Panc1 (cell line): ENCODE measurements at regions of chr12 and their contacts with region 1.

Region 1: DNA sequence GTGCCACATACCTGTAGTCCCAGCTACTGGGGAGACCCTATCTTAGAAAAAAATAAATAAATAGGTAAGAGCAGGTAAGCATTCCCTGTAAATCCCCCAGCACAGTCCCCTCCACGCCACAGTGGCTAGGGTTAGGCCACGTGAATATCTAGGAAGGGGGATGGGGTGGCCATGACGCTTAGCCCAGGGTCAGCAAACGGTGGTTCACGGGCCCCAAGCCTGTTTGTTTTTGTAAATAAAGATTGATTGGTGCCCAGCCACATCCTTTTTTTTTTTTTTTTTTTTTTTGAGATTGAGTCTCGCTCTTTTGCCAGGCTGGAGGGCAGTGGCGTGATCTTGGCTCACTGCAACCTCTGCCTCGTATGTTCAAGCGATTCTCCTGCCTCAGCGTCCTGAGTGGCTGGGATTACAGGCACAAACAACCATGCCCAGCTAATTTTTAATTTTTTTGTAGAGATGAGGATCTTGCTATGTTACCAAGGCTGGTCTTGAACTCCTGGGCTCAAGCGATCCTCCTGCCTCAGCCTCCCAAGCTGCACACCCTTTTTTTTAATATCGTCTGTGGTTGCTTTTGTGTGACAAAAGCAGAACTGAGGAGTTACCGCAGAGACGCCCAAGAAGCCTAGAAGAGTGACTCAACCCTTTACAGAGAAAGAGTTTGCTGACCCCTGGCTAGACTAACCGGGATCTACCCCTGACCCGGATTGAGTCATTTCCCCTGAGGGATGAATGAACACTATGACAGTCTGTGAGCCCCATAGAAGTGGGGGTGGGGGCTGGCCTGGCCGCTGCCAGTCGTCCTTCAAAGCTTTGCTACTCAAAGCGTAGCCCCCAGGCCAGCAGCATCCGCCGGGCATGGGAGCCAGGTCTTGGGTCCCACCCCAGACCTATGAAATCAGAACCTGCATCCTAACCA is 113.7 kb upstream of the NCOR2 start:
- DNase-seq: peak; percentile 91
- ATAC-seq: peak; percentile 83
- H3K4me3 ChIP-seq: peak overlapping the region in 1 of 2 experiments; percentile 15; a peak in 2 of 4 replicates
- H3K27ac ChIP-seq: peak overlapping the region; percentile 98
- H3K4me1 ChIP-seq: peaks cover 87% of the 10 kb centered on the region
- H3K27me3 ChIP-seq: no peaks in the 10 kb centered on the region
- CTCF ChIP-seq: no peak

Region 2: DNA sequence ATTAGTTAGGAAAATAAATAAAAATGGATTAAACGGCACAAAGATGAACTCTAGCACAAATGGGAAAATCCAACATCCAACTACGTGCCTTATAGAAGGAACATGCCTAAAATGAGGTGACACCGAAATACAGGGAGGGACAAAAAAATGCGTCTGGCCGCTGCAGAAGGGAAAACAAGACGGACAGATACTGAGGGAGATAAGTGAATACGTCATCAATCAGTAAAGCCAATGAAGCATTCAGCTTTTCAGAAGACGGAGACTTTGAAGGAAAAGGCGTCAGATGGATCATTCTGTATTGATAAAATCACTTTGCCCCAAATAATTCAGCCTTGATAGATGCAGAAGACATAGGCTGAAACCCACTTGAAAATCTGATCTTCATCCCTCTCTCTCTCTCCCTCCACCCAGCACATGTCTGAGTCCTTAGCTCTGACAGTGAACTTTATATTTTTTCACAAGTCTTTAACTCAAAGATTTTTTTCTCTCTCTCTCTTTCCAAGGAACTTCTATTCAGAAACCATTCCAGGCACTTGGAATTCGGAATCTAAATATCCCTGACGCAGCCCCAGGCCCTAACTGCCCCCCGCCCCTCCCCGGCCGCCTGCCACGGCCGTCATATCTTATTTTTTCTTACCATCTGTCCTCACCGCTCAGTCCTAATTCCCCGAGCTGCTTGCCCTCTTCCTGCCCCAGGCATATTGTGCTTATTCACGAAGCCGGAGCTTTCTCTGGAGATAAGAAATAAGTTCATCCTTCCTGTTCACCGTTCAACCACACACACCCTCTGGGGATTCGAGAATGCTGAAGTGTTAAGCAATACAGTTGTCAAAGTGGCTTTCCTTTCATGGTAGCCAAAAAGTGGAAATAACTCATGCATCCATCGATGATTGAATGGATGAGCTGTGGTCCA is 421.7 kb before region 1 on chr12:
- CTCF ChIA-PET with region 1: no interaction called
- POLR2A ChIA-PET with region 1: no interaction called
- in situ Hi-C with region 1: no loop called
- intact Hi-C with region 1: no loop called
- DNase-seq: no peak
- ATAC-seq: no peak
- H3K4me3 ChIP-seq: no peak overlapping the region
- H3K27ac ChIP-seq: no peak overlapping the region
- H3K4me1 ChIP-seq: no peaks in the 10 kb centered on the region
- H3K27me3 ChIP-seq: peaks cover 14% of the 10 kb centered on the region
- CTCF ChIP-seq: no peak

Region 3: DNA sequence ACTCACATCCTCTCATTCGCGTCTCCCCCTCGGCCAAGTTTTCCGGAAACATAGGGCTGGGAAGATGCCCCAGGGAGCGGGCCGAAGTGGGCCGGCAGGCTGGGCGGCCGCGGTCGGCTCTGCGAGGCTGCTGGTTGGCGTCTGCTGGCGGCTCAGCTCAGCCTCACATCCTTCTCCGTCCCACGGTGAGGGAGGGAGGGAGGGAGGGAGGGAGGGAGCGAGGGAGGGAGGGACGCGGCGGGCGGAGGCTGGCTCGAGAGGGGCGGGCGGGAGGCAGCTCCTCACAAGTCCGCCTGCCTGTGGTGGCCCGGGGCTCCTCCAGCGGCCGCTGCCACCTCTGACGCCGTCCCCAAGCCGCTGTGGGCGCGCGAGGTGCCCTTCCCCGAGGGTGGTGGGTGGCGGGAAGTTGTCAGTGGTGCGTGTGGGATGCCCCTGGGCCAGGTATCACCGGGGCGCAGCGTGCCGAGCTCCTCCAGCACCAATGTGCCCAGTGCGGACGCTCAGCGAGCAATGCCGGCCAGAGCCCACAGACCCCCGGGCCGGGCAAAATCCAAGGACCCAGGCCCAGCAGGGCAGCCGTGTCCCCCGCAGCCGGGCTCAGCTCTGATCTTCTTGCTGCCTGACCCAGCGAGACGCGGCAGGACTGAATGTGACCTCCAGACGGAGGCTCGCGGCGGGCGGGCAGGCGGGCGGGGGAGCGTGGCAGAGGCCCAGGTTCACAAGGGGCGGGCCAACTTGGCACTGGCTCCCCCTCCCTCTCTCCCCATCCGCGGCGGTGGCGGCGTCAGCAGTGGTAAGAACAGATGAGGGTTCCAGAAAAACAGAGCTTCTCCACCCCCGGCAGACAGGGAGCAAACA is 292.2 kb before region 1 on chr12:
- CTCF ChIA-PET with region 1: no interaction called
- POLR2A ChIA-PET with region 1: no interaction called
- in situ Hi-C with region 1: no loop called
- intact Hi-C with region 1: loop called (anchors 10 kb)
- DNase-seq: no peak
- ATAC-seq: peak; percentile 59
- H3K4me3 ChIP-seq: peak overlapping the region; percentile 72 to 86
- H3K27ac ChIP-seq: peak overlapping the region; percentile 94
- H3K4me1 ChIP-seq: peaks cover 73% of the 10 kb centered on the region
- H3K27me3 ChIP-seq: no peaks in the 10 kb centered on the region
- CTCF ChIP-seq: no peak

Region 4: DNA sequence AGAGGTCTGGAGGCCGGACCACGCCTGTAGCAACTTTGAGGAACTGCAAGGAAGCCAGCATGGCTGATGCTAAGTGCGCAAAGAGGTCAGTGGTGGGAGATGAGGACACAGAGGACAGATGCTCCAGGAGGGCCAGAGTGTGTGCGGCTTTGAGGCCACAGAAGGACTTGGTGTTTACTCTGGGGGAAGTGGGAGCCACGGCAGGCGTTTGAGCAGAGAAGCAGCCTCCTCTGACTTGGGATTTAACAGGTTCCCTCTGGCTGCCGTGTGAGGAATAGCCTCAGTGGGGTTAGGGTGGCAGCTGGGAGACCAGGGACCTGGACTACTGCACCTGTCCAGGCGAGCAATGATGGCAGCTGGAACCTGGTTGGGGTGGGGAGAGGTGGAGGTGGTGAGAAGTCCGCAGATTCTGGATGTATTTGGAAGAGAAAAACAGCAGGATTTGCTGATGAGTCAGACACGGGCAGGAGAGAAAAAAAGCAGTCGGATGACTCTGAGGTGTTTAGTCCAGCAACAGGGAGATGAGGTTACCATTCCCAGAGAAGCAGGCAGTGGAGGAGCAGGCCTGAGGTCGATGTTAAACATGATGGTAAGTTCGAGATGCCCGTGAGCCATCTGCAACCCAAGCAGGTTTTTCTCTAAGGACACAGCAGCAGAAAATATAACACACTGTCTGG is 39.0 kb after region 1 on chr12:
- CTCF ChIA-PET with region 1: interaction called, 3 read pairs
- POLR2A ChIA-PET with region 1: interaction called, 3 read pairs
- in situ Hi-C with region 1: no loop called
- intact Hi-C with region 1: loop called (anchors 5 kb)
- DNase-seq: no peak
- ATAC-seq: peak; percentile 40
- H3K4me3 ChIP-seq: no peak overlapping the region
- H3K27ac ChIP-seq: peak overlapping the region; percentile 69
- H3K4me1 ChIP-seq: peaks cover 39% of the 10 kb centered on the region
- H3K27me3 ChIP-seq: no peaks in the 10 kb centered on the region
- CTCF ChIP-seq: peak; percentile 13; the same call in 1 of the 2 replicates

Region 5: DNA sequence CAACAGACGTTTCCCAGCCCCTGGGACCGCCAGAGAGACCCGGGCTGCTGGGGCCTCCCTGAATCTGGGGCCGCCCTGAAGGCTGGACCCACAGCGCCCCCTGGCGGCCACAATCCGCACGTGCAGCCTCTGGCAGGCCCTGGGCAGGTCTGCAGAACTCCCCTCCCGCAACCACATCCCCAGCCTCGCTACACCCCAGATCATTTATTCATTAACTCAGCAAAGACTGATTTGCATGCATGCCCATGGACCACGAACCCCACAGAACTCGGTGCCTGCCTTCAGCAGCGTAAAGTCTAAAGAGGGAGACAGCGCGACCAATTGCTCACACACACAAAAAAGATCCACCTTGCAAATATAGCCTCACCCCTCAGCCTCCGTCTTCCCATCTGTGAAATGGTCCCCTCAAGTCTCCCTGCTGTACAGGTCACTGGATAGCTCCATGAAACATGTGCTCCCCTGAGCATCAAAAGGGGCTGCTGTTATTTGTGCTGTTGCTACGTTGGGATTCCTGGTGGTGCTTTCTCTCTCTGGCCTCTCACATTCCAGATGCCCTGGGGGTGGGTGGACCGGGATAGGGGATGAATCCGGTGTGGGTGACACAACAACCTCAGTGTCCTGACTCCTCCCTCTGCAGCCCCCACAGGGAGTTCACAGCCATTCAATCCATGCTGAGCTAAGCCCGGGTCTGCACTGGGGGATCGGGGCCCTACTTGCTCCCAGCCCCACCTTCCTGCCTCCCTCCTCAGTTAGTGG is 86.1 kb after region 1 on chr12:
- CTCF ChIA-PET with region 1: no interaction called
- POLR2A ChIA-PET with region 1: no interaction called
- in situ Hi-C with region 1: no loop called
- intact Hi-C with region 1: loop called (anchors 5 kb)
- DNase-seq: no peak
- ATAC-seq: peak; percentile 85
- H3K4me3 ChIP-seq: no peak overlapping the region
- H3K27ac ChIP-seq: 0 out of 2 replicates have a peak overlapping the region, but pooled peaks have one; percentile 3
- H3K4me1 ChIP-seq: peaks cover 32% of the 10 kb centered on the region
- H3K27me3 ChIP-seq: no peaks in the 10 kb centered on the region
- CTCF ChIP-seq: peak; percentile 98